CD8-positive, alpha-beta memory T cell (primary cell): ENCODE measurements at regions of chr2 and their contacts with region 1.

Region 1: GRCh38 chr2:230847883-230848388 is 16.8 kb upstream of the ITM2C start:
- DNase-seq: peak; percentile 70 to 89 (median 76)
- H3K4me3 ChIP-seq: no peak overlapping the region
- H3K4me3 Mint-ChIP-seq: peak overlapping the region in 1 of 7 donors; percentile 24
- H3K27ac ChIP-seq: no peak overlapping the region
- H3K27ac Mint-ChIP-seq: no peak overlapping the region
- H3K4me1 ChIP-seq: peaks cover 6% of the 10 kb centered on the region
- H3K4me1 Mint-ChIP-seq: peaks cover 5 to 9% (median 6%) of the 10 kb centered on the region in 3 donors
- H3K27me3 ChIP-seq: no peaks in the 10 kb centered on the region
- H3K27me3 Mint-ChIP-seq: peaks cover 24 to 40% of the 10 kb centered on the region in 2 donors

Region 2: GRCh38 chr2:230691005-230691647 is 156.8 kb before region 1 on chr2:
- CTCF ChIA-PET with region 1: no interaction called
- POLR2A ChIA-PET with region 1: no interaction called
- DNase-seq: no peak
- H3K4me3 ChIP-seq: no peak overlapping the region
- H3K4me3 Mint-ChIP-seq: no peak overlapping the region
- H3K27ac ChIP-seq: no peak overlapping the region
- H3K27ac Mint-ChIP-seq: no peak overlapping the region
- H3K4me1 ChIP-seq: no peaks in the 10 kb centered on the region
- H3K4me1 Mint-ChIP-seq: peaks cover 0 to 5% (median 4%) of the 10 kb centered on the region in 3 donors
- H3K27me3 ChIP-seq: no peaks in the 10 kb centered on the region
- H3K27me3 Mint-ChIP-seq: peaks cover 0 to 1% of the 10 kb centered on the region in 2 donors

Region 3: DNA sequence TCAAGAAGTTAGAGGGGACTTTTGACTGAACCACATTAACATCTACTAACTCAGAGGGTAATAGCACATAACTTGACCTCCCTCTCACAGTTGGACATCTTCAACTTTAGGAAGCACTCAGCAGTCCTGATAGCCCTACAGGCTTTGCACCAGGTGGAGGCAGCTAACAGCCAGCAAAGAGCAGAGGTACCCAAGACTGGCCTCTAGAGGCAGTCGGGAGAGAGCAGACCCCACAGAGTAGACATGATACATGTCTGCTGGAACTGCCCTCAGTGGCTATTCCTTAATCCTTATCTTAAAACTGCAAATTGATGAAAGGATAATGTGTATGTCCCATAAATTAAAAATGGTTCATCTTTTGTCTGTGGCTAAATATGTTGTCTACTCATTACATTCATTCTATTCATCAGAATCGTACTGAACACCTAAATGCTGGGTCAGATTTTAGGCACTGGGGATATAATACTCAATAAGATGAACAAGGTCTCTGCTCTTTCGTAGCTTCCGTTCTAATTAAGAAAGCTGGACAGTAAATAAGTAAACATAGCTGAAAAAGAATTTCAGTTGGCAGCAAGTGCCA is 85.5 kb before region 1 on chr2:
- CTCF ChIA-PET with region 1: no interaction called
- POLR2A ChIA-PET with region 1: no interaction called
- DNase-seq: peak in 2 of 5 donors; percentile 25 to 56
- H3K4me3 ChIP-seq: no peak overlapping the region
- H3K4me3 Mint-ChIP-seq: no peak overlapping the region
- H3K27ac ChIP-seq: no peak overlapping the region
- H3K27ac Mint-ChIP-seq: peak overlapping the region in 2 of 8 donors; percentile 11 to 56
- H3K4me1 ChIP-seq: peaks cover 23% of the 10 kb centered on the region
- H3K4me1 Mint-ChIP-seq: peaks cover 43 to 61% (median 59%) of the 10 kb centered on the region in 3 donors
- H3K27me3 ChIP-seq: no peaks in the 10 kb centered on the region
- H3K27me3 Mint-ChIP-seq: no peaks in the 10 kb centered on the region

Region 4: DNA sequence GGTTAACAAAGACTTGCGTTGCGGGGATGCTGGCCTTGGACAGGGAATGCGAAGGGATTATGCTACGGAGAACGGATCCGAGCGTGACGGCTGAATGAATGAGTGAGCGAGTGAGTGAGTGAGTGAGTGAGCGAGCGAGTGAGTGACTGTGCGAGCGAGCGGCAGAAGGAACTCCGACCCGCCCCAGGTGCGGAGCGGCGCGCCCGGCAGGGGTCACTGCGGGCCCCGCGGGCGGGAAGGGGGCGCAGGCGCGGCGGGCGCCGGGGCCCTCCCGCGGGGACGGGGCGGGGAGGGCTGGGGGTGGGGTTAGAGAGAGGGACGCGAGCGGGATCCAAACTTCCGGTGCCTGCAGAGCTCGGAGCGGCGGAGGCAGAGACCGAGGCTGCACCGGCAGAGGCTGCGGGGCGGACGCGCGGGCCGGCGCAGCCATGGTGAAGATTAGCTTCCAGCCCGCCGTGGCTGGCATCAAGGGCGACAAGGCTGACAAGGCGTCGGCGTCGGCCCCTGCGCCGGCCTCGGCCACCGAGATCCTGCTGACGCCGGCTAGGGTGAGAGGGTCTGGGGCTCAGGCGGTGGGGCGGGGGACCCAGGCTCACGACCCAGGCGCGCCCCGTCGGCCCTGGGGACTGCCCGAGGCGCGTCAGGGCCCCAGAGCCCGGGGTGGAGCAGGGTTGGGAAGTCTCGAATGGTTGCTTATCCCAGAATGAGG is 16.8 kb after region 1 on chr2 and contains the start of gene ITM2C:
- CTCF ChIA-PET with region 1: interaction called, 14 read pairs
- POLR2A ChIA-PET with region 1: no interaction called
- DNase-seq: peak; percentile 63 to 82 (median 72)
- H3K4me3 ChIP-seq: peak within 1 kb of the TSS; percentile 65
- H3K4me3 Mint-ChIP-seq: peak within 1 kb of the TSS; percentile 91 to 95 (median 94)
- H3K27ac ChIP-seq: peak within 1 kb of the TSS; percentile 24
- H3K27ac Mint-ChIP-seq: peak within 1 kb of the TSS; percentile 81 to 98 (median 88)
- H3K4me1 ChIP-seq: peaks cover 41% of the 10 kb centered on the region
- H3K4me1 Mint-ChIP-seq: peaks cover 40 to 79% (median 49%) of the 10 kb centered on the region in 3 donors
- H3K27me3 ChIP-seq: no peaks in the 10 kb centered on the region
- H3K27me3 Mint-ChIP-seq: peaks cover 3 to 6% of the 10 kb centered on the region in 2 donors
- total RNA-seq, gene ITM2C: 56.1 to 58.6 TPM

Region 5: DNA sequence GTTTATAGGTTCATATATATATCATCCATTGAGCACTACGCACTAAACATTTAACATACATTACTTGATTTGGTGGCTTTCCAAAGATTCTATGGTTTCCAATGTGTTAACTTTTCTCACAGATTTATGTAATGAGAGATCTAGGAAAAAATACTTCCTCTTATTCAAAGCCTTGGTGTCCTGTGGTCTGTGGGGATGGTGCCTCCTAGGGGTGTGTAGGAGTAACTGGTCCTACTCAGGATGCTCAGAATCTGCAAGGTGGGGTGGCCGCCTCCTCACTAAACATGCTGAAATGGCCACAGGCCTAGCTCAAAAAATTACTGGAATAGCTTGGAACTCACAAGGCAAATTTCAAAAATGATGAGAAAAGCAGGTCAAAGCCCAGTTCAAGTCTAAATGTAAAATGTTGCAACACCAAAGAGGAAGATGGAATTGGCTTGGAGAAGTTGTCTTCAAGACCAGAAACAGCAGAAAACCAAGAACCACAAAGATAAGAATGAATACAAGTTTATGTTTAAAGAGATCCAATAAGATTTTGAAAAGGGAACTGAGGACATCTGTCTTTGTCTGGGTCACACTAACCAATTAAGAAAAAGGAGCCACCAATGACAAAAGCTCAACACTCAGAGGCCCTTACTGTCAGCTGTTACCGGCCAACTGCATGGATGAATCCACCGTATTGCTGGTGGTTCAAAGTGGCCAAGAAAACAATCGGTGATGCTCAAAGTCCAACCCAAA is 65.6 kb after region 1 on chr2:
- CTCF ChIA-PET with region 1: interaction called, 12 read pairs
- POLR2A ChIA-PET with region 1: no interaction called
- DNase-seq: peak in 2 of 5 donors; percentile 28 to 56
- H3K4me3 ChIP-seq: no peak overlapping the region
- H3K4me3 Mint-ChIP-seq: no peak overlapping the region
- H3K27ac ChIP-seq: no peak overlapping the region
- H3K27ac Mint-ChIP-seq: peak overlapping the region in 2 of 8 donors; percentile 48 to 59
- H3K4me1 ChIP-seq: no peaks in the 10 kb centered on the region
- H3K4me1 Mint-ChIP-seq: peaks cover 11 to 75% (median 53%) of the 10 kb centered on the region in 3 donors
- H3K27me3 ChIP-seq: no peaks in the 10 kb centered on the region
- H3K27me3 Mint-ChIP-seq: peaks cover 11 to 20% of the 10 kb centered on the region in 2 donors